ENCODE measurements at regions of chr3 and their contacts with region 1.

Region 1: DNA sequence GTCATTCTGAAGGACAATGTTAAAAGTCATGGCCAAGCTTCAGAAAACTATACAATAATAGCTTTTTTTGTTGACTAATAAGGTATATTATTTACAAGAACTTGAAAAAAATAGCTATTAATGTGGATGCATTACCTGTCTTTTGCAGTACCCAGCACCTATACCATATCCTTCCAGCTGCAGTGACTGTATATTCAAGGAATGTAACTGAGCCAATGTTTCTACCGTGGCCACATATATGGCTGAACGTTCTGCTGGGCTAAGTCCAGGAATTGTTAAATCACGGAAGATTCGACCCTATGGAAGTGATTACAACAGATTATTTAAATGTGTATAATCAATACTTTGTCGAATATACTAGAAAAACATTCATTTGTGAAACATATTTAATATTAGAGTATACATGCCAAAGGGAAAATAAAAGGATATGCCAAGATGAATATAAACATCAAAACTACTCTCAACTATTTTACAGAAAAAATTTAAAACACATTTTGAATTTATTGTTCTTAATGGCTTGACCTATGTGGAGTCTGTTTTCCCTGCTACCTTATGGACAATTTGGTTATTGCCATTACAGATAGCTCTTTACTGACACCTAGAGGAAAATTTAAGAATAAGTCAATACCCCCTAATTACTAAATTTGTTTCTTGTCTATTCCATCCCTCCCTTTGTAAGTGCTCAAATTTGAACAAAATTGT is 17.6 kb downstream of the ACAD11 start:
- DNase-seq: peak in 3 of 14 experiments; percentile 48 to 54 (median 51)
- ATAC-seq: peak; percentile 58
- H3K4me3 ChIP-seq: no peak overlapping the region
- H3K4me3 Mint-ChIP-seq: no peak overlapping the region
- H3K27ac ChIP-seq: no peak overlapping the region
- H3K27ac Mint-ChIP-seq: no peak overlapping the region
- H3K4me1 ChIP-seq: no peaks in the 10 kb centered on the region
- H3K4me1 Mint-ChIP-seq: no peaks in the 10 kb centered on the region
- H3K27me3 ChIP-seq: no peaks in the 10 kb centered on the region
- H3K27me3 Mint-ChIP-seq: no peaks in the 10 kb centered on the region
- CTCF ChIP-seq: peak; percentile 85

Region 2: GRCh38 chr3:132210476-132211346 is 431.3 kb before region 1 on chr3:
- CTCF ChIA-PET with region 1: no interaction called
- POLR2A ChIA-PET with region 1: no interaction called
- intact Hi-C with region 1: no loop called
- DNase-seq: peak in 5 of 14 experiments; percentile 1 to 17 (median 3)
- ATAC-seq: no peak
- H3K4me3 ChIP-seq: no peak overlapping the region
- H3K4me3 Mint-ChIP-seq: no peak overlapping the region
- H3K27ac ChIP-seq: no peak overlapping the region
- H3K27ac Mint-ChIP-seq: no peak overlapping the region
- H3K4me1 ChIP-seq: no peaks in the 10 kb centered on the region
- H3K4me1 Mint-ChIP-seq: no peaks in the 10 kb centered on the region
- H3K27me3 ChIP-seq: no peaks in the 10 kb centered on the region
- H3K27me3 Mint-ChIP-seq: peaks cover 32% of the 10 kb centered on the region
- CTCF ChIP-seq: no peak

Region 3: GRCh38 chr3:132535575-132536441 is 106.2 kb before region 1 on chr3:
- CTCF ChIA-PET with region 1: interaction called, 11 read pairs
- POLR2A ChIA-PET with region 1: no interaction called
- intact Hi-C with region 1: loop called (anchors 1 to 2 kb)
- DNase-seq: peak; percentile 1 to 72 (median 34)
- ATAC-seq: peak; percentile 49
- H3K4me3 ChIP-seq: no peak overlapping the region
- H3K4me3 Mint-ChIP-seq: no peak overlapping the region
- H3K27ac ChIP-seq: no peak overlapping the region
- H3K27ac Mint-ChIP-seq: no peak overlapping the region
- H3K4me1 ChIP-seq: no peaks in the 10 kb centered on the region
- H3K4me1 Mint-ChIP-seq: no peaks in the 10 kb centered on the region
- H3K27me3 ChIP-seq: no peaks in the 10 kb centered on the region
- H3K27me3 Mint-ChIP-seq: no peaks in the 10 kb centered on the region
- CTCF ChIP-seq: peak; percentile 84

Measured in CD4-positive, alpha-beta T cell (primary cell).